ENCODE measurements at regions of chr3 and their contacts with region 1.

Region 1: GRCh38 chr3:32872487-32873382 is 54.9 kb downstream of the TRIM71 start:
- DNase-seq: no peak
- H3K4me3 ChIP-seq: peak overlapping the region in 1 of 4 experiments; percentile 22; a peak in 1 of 8 replicates
- H3K27ac ChIP-seq: 0 out of 2 replicates have a peak overlapping the region, but pooled peaks have one; percentile 2
- H3K4me1 ChIP-seq: peaks cover 27 to 51% (median 46%) of the 10 kb centered on the region in 4 experiments
- H3K27me3 ChIP-seq: no peaks in the 10 kb centered on the region
- CTCF ChIP-seq: no peak
- EP300 ChIP-seq: no peak
- POLR2A ChIP-seq: no peak; a peak in 2 of 3 replicates
- RAD21 ChIP-seq: no peak

Region 2: DNA sequence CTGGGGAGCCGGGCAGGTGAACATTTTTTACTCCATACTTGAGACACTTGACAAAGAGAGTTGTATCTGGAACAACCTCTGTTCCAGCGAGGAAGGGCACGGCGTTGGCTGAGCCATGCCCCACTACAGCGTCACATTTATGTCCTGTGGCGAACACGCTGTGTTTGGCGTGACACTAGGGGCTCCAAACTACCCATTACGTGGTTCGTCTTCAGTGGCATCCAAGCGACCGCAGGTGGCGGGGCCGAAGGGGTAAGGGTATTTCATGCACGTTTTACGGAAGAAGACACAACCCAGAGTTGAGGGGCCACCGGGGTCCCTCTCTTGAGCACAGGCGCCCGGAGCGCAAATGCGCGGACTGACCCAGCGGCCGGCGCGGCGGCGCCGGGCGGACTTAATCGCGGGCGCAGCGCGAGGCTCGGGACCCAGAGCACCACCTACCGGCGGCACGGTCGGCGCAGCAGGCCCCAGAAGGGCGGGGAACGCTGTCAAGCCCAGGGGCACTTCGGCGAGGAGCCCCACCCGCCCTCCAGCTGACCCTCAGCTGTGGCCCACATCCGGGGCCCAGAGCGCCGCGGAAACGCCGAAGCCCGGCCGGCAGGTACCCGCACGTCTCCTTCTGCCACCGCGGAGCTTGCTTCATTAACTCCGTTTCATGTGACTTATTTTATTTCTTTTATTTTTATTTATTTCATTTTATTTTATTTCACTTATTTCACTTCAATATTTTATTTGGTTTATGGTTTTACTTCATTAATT is 91.3 kb before region 1 on chr3:
- CTCF ChIA-PET with region 1: interaction called, 4 read pairs
- POLR2A ChIA-PET with region 1: interaction called, 11 read pairs
- DNase-seq: peak; percentile 86 to 94
- H3K4me3 ChIP-seq: peak overlapping the region; percentile 45 to 65 (median 51)
- H3K27ac ChIP-seq: peak overlapping the region; percentile 94
- H3K4me1 ChIP-seq: peaks cover 16 to 31% (median 22%) of the 10 kb centered on the region in 4 experiments; a peak in 6 of 7 replicates
- H3K27me3 ChIP-seq: no peaks in the 10 kb centered on the region
- CTCF ChIP-seq: peak; percentile 77 to 88 (median 80)
- EP300 ChIP-seq: peak in 1 of 2 experiments; percentile 92; a peak in 2 of 3 replicates
- POLR2A ChIP-seq: peak; percentile 51 to 82; a peak in 2 of 3 replicates
- RAD21 ChIP-seq: peak; percentile 63 to 75

Region 3: DNA sequence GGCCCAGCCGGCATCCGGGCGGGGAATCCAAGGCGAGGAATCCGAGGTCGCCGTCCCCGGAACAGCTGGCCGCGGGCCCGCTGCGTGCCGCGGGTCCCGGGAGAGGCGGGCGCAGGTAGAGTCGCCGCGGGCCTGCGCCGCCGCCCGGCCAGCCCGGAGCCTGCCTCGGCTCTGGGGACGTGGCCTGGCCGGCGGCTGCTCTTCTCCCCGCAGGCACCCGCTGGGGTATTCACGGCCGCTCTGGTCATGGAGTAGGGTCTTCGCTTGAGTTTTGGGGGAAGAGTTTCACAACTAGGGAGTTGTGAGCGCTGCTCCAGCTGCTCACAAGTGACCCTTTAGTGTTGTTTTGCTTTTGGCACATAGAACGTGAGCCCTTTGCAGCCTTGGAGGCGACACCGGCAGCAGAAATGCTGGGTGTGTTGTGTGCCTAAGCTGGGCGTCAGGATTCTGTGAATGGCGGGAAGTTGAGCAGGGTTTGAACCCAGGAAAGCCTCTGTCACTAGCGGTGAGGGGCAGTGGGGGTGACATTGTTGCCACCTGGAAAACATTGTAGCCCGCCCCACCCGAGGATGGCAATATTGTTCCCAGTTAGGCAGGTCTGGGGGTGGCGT is 50.9 kb before region 1 on chr3:
- CTCF ChIA-PET with region 1: interaction called, 13 read pairs
- POLR2A ChIA-PET with region 1: interaction called, 72 read pairs
- DNase-seq: no peak
- H3K4me3 ChIP-seq: peak overlapping the region; percentile 88 to 98 (median 94)
- H3K27ac ChIP-seq: peak overlapping the region; percentile 50
- H3K4me1 ChIP-seq: peaks cover 4 to 25% (median 17%) of the 10 kb centered on the region in 4 experiments
- H3K27me3 ChIP-seq: no peaks in the 10 kb centered on the region
- CTCF ChIP-seq: no peak
- EP300 ChIP-seq: no peak
- POLR2A ChIP-seq: peak in 1 of 2 experiments; percentile 19; a peak in 1 of 3 replicates
- RAD21 ChIP-seq: 0 out of 4 replicates have a peak, but pooled peaks of 1 of the 2 experiments have one; percentile 4

Region 4: GRCh38 chr3:32842531-32842931 is 30.2 kb before region 1 on chr3:
- CTCF ChIA-PET with region 1: interaction called, 34 read pairs
- POLR2A ChIA-PET with region 1: interaction called, 104 read pairs
- DNase-seq: no peak
- H3K4me3 ChIP-seq: peak overlapping the region in 3 of 4 experiments; percentile 12 to 57 (median 35); a peak in 5 of 8 replicates
- H3K27ac ChIP-seq: peak overlapping the region; percentile 51; the same call in 1 of the 2 replicates
- H3K4me1 ChIP-seq: peaks cover 43 to 68% (median 61%) of the 10 kb centered on the region in 4 experiments
- H3K27me3 ChIP-seq: no peaks in the 10 kb centered on the region
- CTCF ChIP-seq: no peak
- EP300 ChIP-seq: no peak
- POLR2A ChIP-seq: peak in 1 of 2 experiments; percentile 60; a peak in 2 of 3 replicates
- RAD21 ChIP-seq: no peak

Region 5: DNA sequence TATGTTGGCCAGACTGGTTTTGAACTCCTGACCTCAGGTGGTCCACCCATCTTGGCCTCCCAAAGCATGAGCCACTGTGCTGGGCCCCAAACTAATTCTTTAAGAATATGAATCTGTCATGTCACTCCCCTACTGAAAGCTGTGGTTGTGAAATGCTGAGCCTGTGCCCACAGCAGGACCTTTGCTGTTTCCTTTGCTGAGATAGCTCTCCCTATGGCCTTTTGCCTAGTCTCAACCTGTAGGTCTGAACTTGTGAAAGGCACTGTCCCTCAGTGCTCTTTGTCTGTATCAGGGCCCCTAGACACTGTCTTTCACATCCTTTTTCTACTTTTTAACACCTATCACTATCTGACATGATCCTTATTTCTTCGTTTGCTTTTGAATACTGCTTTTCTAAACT is 16.0 kb after region 1 on chr3:
- CTCF ChIA-PET with region 1: interaction called, 40 read pairs
- POLR2A ChIA-PET with region 1: interaction called, 84 read pairs
- DNase-seq: no peak
- H3K4me3 ChIP-seq: no peak overlapping the region
- H3K27ac ChIP-seq: no peak overlapping the region
- H3K4me1 ChIP-seq: peaks cover 7 to 23% (median 12%) of the 10 kb centered on the region in 4 experiments
- H3K27me3 ChIP-seq: no peaks in the 10 kb centered on the region
- CTCF ChIP-seq: no peak
- EP300 ChIP-seq: no peak
- POLR2A ChIP-seq: peak in 1 of 2 experiments; percentile 60; a peak in 2 of 3 replicates
- RAD21 ChIP-seq: no peak

Region 6: DNA sequence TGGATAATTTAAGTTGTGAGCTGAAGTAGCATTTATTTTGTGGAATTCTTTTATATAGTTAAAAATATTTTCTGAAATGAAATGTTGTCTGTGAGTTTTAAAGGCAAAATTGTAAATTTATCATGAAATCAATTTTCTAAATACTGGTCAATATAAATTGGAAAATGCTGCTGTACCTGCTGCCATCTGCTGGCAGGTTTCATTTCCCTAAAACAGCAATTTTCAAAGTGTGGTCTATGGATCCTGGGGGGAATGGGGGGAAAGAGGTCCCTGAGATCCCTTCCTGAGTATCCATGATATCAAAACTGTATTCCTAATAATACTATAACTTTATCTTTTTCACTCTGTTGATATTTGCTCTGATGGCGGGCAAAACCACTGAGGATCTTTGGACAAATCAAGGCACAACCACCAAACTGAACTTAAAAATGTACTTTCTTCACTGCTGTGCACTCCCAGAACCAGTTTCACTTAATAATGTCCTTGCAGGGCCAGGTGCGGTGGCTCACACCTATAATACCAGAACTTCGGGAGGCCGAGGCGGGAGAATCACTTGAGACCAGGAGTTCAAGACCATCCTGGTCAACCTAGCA is 61.5 kb after region 1 on chr3:
- CTCF ChIA-PET with region 1: interaction called, 10 read pairs
- POLR2A ChIA-PET with region 1: no interaction called
- DNase-seq: no peak
- H3K4me3 ChIP-seq: no peak overlapping the region
- H3K27ac ChIP-seq: no peak overlapping the region
- H3K4me1 ChIP-seq: no peaks in the 10 kb centered on the region
- H3K27me3 ChIP-seq: no peaks in the 10 kb centered on the region
- CTCF ChIP-seq: peak; percentile 6 to 63 (median 55); a peak in 3 of 4 replicates
- EP300 ChIP-seq: no peak
- POLR2A ChIP-seq: no peak
- RAD21 ChIP-seq: peak; percentile 72 to 75

Measured in H1 (cell line).